ENCODE measurements at regions of chr1 and their contacts with region 1.

Region 1: GRCh38 chr1:205227584-205228006 is at the start of gene TMCC2:
- DNase-seq: peak; percentile 91
- ATAC-seq: peak; percentile 95
- H3K4me3 Mint-ChIP-seq: peak within 1 kb of the TSS; percentile 80
- H3K27ac Mint-ChIP-seq: peak within 1 kb of the TSS; percentile 77
- H3K4me1 Mint-ChIP-seq: peaks cover 45% of the 10 kb centered on the region
- H3K27me3 Mint-ChIP-seq: peaks cover 34% of the 10 kb centered on the region
- total RNA-seq, gene TMCC2: 2.6 to 2.7 TPM

Region 2: DNA sequence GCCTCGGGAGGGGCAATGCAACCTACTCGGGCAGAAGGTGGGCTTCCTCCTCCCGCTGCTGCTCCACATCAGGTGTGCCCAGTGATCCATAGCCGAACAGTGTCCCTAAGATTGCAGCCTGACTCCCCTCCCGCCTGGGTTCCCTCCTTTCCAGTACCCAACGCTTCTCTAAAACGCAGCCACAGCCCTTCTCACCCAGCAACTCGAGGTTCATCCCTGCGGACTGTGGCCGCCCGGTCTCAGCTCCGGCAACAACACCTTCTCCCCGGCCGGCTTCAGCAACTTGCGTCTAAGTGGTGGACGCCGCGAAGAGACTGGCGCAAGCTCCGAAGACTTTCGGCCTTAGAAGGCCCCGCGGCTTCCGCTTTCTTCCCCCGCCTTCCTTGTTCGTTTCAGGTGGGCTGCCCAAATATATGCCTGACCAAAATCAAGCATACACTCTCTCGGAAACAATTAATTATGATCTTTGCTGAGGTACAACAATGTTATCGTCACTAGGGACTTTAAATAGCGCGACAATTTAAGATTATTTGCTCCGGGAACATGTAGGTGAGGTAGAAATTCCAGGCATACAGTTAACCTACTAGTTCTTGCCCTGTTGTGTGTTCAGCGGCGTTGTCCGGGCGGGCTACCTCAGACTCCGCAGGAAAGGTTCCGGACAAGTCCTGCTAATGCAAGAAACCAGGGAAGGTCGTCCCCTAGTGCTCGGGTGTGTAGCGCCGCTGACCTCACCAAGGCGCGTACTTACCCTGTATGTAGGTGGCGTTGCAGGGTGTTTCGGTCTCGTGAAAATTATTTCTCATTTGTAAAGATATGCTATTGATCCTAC is 105.7 kb before region 1 on chr1 and contains the start of gene RBBP5:
- CTCF ChIA-PET with region 1: interaction called, 44 read pairs
- POLR2A ChIA-PET with region 1: interaction called, 8 read pairs
- DNase-seq: peak; percentile 96
- ATAC-seq: peak; percentile 98
- H3K4me3 Mint-ChIP-seq: peak within 1 kb of the TSS; percentile 96
- H3K27ac Mint-ChIP-seq: peak within 1 kb of the TSS; percentile 99
- H3K4me1 Mint-ChIP-seq: peaks cover 39% of the 10 kb centered on the region
- H3K27me3 Mint-ChIP-seq: no peaks in the 10 kb centered on the region
- total RNA-seq, gene RBBP5: 20.3 to 22.0 TPM

Region 3: GRCh38 chr1:205199090-205199930 is 28.3 kb before region 1 on chr1:
- CTCF ChIA-PET with region 1: interaction called, 35 read pairs
- POLR2A ChIA-PET with region 1: no interaction called
- DNase-seq: peak; percentile 43
- ATAC-seq: peak; percentile 83
- H3K4me3 Mint-ChIP-seq: peak overlapping the region; percentile 62
- H3K27ac Mint-ChIP-seq: peak overlapping the region; percentile 71
- H3K4me1 Mint-ChIP-seq: peaks cover 49% of the 10 kb centered on the region
- H3K27me3 Mint-ChIP-seq: no peaks in the 10 kb centered on the region

Region 4: DNA sequence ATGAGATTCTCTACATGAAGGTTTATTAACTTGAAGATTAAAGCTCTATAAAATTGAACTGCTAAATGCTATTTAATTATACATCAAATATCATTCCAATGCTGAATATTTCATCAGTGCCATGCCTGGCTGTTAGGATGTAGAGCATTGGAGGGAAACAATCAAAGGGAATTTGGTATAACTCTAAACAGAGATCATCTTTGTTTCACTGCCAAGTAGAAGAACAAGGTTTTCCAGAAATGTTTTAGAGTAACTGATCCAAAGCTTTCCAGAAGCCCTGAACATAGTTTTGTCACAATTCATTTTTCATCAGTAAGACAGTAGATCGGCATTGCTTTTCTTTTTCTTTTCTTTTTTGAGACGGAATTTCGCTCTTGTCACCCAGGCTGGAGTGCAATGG is 10.2 kb before region 1 on chr1:
- CTCF ChIA-PET with region 1: interaction called, 31 read pairs
- POLR2A ChIA-PET with region 1: interaction called, 7 read pairs
- DNase-seq: no peak
- ATAC-seq: no peak
- H3K4me3 Mint-ChIP-seq: no peak overlapping the region
- H3K27ac Mint-ChIP-seq: no peak overlapping the region
- H3K4me1 Mint-ChIP-seq: peaks cover 20% of the 10 kb centered on the region
- H3K27me3 Mint-ChIP-seq: peaks cover 4% of the 10 kb centered on the region

Region 5: GRCh38 chr1:205273551-205273982 is 46.0 kb after region 1 on chr1:
- CTCF ChIA-PET with region 1: interaction called, 24 read pairs
- POLR2A ChIA-PET with region 1: no interaction called
- DNase-seq: peak; percentile 89
- ATAC-seq: peak; percentile 93
- H3K4me3 Mint-ChIP-seq: no peak overlapping the region
- H3K27ac Mint-ChIP-seq: no peak overlapping the region
- H3K4me1 Mint-ChIP-seq: peaks cover 22% of the 10 kb centered on the region
- H3K27me3 Mint-ChIP-seq: peaks cover 11% of the 10 kb centered on the region

Measured in activated CD8-positive, alpha-beta T cell treated with anti-CD3 and anti-CD28 coated beads, Interleukin-2, amount 10 ng/mL, durations not matched to agents 7 days and 5 days (primary cell).